Lower leg skin (tissue), 4 donors: ENCODE measurements at regions of chr6 and their contacts with region 1.

Region 1: GRCh38 chr6:41920921-41921711 is at the starts of genes BYSL and MED20:
- DNase-seq: peak; percentile 91 to 98
- H3K4me3 ChIP-seq: peak within 1 kb of the TSS; percentile 91
- CTCF ChIP-seq: peak in 1 of 3 donors; percentile 90
- POLR2A ChIP-seq: no peak
- total RNA-seq, gene BYSL: 4.1 to 12.2 (median 7.7) TPM
- total RNA-seq, gene MED20: 5.7 to 11.5 (median 9.8) TPM

Region 2: GRCh38 chr6:41787219-41787917 is 133.7 kb before region 1 on chr6 and contains the start of gene TOMM6:
- intact Hi-C with region 1: loop called (anchors 10 kb)
- DNase-seq: peak; percentile 93 to 99
- H3K4me3 ChIP-seq: peak within 1 kb of the TSS; percentile 73
- CTCF ChIP-seq: peak in 1 of 3 donors; percentile 88
- POLR2A ChIP-seq: peak in 1 of 2 donors; percentile 21
- total RNA-seq, gene TOMM6: 90.7 to 136 (median 100) TPM

Region 3: GRCh38 chr6:41846666-41847237 is 74.4 kb before region 1 on chr6:
- intact Hi-C with region 1: loop called (anchors 10 kb)
- DNase-seq: peak in 1 of 2 donors; percentile 72
- H3K4me3 ChIP-seq: no peak overlapping the region
- CTCF ChIP-seq: peak in 1 of 3 donors; percentile 59
- POLR2A ChIP-seq: no peak

Region 4: DNA sequence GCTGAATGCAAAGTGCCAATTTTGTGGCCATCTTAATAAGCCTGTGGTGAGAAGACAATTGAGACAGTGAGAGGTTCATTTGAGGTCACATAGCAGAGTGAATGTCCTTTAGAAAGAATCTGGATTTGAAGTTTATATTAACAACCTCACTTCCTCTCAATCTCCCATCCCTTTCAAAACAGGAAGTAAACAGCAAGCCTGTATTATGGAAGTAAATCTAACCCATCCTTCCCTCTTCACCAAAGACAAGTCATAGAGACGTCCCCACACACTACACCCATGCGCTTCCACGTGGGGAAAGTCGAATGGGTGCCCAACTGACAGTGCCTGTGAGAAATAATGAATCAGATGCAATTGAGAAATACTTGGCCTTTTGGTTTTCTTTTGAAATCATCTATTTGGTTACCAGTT is 49.3 kb after region 1 on chr6:
- intact Hi-C with region 1: no loop called
- DNase-seq: peak; percentile 32 to 53
- H3K4me3 ChIP-seq: no peak overlapping the region
- CTCF ChIP-seq: no peak
- POLR2A ChIP-seq: no peak